Caco-2 (cell line): ENCODE measurements at regions of chr6 and their contacts with region 1.

Region 1: GRCh38 chr6:68343901-68344300 is 291.2 kb upstream of the ADGRB3 start:
- DNase-seq: peak; percentile 46 to 61
- H3K4me3 ChIP-seq: no peak overlapping the region
- H3K4me3 Mint-ChIP-seq: no peak overlapping the region
- H3K27ac Mint-ChIP-seq: no peak overlapping the region
- H3K4me1 ChIP-seq: no peaks in the 10 kb centered on the region
- H3K4me1 Mint-ChIP-seq: no peaks in the 10 kb centered on the region
- H3K27me3 ChIP-seq: no peaks in the 10 kb centered on the region
- H3K27me3 Mint-ChIP-seq: no peaks in the 10 kb centered on the region
- CTCF ChIP-seq: peak; percentile 33 to 57

Region 2: GRCh38 chr6:68468244-68468884 is 124.5 kb after region 1 on chr6:
- CTCF ChIA-PET with region 1: interaction called, 5 read pairs
- POLR2A ChIA-PET with region 1: no interaction called
- intact Hi-C with region 1: loop called (anchors 1 kb)
- DNase-seq: peak in 1 of 2 experiments; percentile 24
- H3K4me3 ChIP-seq: no peak overlapping the region
- H3K4me3 Mint-ChIP-seq: no peak overlapping the region
- H3K27ac Mint-ChIP-seq: no peak overlapping the region
- H3K4me1 ChIP-seq: no peaks in the 10 kb centered on the region
- H3K4me1 Mint-ChIP-seq: no peaks in the 10 kb centered on the region
- H3K27me3 ChIP-seq: no peaks in the 10 kb centered on the region
- H3K27me3 Mint-ChIP-seq: no peaks in the 10 kb centered on the region
- CTCF ChIP-seq: peak in 1 of 2 experiments; percentile 42

Region 3: GRCh38 chr6:68572525-68572924 is 228.6 kb after region 1 on chr6:
- CTCF ChIA-PET with region 1: no interaction called
- POLR2A ChIA-PET with region 1: no interaction called
- intact Hi-C with region 1: loop called (anchors 10 kb)
- DNase-seq: peak; percentile 49 to 54
- H3K4me3 ChIP-seq: no peak overlapping the region
- H3K4me3 Mint-ChIP-seq: no peak overlapping the region
- H3K27ac Mint-ChIP-seq: no peak overlapping the region
- H3K4me1 ChIP-seq: no peaks in the 10 kb centered on the region
- H3K4me1 Mint-ChIP-seq: no peaks in the 10 kb centered on the region
- H3K27me3 ChIP-seq: no peaks in the 10 kb centered on the region
- H3K27me3 Mint-ChIP-seq: no peaks in the 10 kb centered on the region
- CTCF ChIP-seq: peak; percentile 41 to 58

Region 4: GRCh38 chr6:68778356-68779020 is 434.6 kb after region 1 on chr6:
- CTCF ChIA-PET with region 1: no interaction called
- POLR2A ChIA-PET with region 1: no interaction called
- intact Hi-C with region 1: loop called (anchors 1 kb)
- DNase-seq: peak in 1 of 2 experiments; percentile 27
- H3K4me3 ChIP-seq: no peak overlapping the region
- H3K4me3 Mint-ChIP-seq: no peak overlapping the region
- H3K27ac Mint-ChIP-seq: no peak overlapping the region
- H3K4me1 ChIP-seq: no peaks in the 10 kb centered on the region
- H3K4me1 Mint-ChIP-seq: no peaks in the 10 kb centered on the region
- H3K27me3 ChIP-seq: no peaks in the 10 kb centered on the region
- H3K27me3 Mint-ChIP-seq: peaks cover 3% of the 10 kb centered on the region
- CTCF ChIP-seq: peak; percentile 53 to 59